Activated CD8-positive, alpha-beta memory T cell treated with anti-CD3 and anti-CD28 coated beads, Interleukin-2, amount 10 ng/mL, durations not matched to agents 7 days and 5 days (primary cell): ENCODE measurements at regions of chr11 and their contacts with region 1.

Region 1: GRCh38 chr11:62787005-62787759 is at the start of gene TMEM179B:
- DNase-seq: peak; percentile 99
- ATAC-seq: peak; percentile 71
- H3K4me3 Mint-ChIP-seq: peak within 1 kb of the TSS; percentile 95
- H3K27ac Mint-ChIP-seq: peak within 1 kb of the TSS; percentile 97
- H3K4me1 Mint-ChIP-seq: peaks cover 45% of the 10 kb centered on the region
- H3K27me3 Mint-ChIP-seq: no peaks in the 10 kb centered on the region
- total RNA-seq, gene TMEM179B: 42.4 to 43.0 TPM

Region 2: DNA sequence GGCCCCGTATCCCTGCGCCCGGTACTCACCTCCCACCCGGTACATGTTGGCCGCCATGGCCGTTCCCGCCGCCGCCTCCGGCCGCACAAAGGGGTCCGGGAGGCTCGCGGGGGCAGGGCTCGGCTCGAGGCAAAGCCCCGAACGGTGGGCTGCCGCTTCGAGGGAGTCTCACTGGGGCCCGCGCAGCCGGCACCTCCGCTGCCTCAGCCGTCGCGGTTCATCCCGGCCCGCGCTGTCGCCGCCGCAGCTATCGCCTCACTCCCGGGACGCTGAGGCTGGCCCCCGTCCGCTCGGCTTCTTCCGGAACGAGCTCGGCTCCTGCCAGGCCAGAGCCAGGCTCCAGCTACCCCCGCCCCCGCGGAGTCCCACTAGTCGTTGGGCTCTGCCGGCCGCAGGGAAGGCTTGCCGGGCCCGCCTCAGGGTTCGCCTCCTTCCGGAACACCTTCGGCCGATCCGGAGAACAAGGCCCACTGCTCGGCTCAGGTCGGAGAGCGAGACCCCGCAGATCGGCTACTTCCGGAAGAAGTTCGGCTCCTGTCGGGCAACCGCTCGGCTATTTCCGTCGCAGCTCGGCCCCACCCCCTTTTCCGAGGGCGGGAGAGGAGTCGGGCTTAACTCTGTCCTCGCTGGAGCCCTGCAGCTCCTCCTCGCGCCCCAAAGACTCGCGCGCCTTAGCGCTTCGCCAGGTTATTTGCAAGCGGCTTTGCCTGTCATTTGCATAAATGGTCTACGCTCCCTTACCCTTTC is 185.6 kb before region 1 on chr11 and contains the start of gene MTA2:
- CTCF ChIA-PET with region 1: no interaction called
- DNase-seq: peak; percentile 99
- ATAC-seq: peak; percentile 89
- H3K4me3 Mint-ChIP-seq: peak within 1 kb of the TSS; percentile 97
- H3K27ac Mint-ChIP-seq: peak within 1 kb of the TSS; percentile 94
- H3K4me1 Mint-ChIP-seq: peaks cover 54% of the 10 kb centered on the region
- H3K27me3 Mint-ChIP-seq: no peaks in the 10 kb centered on the region
- total RNA-seq, gene MTA2: 245 to 264 TPM

Region 3: DNA sequence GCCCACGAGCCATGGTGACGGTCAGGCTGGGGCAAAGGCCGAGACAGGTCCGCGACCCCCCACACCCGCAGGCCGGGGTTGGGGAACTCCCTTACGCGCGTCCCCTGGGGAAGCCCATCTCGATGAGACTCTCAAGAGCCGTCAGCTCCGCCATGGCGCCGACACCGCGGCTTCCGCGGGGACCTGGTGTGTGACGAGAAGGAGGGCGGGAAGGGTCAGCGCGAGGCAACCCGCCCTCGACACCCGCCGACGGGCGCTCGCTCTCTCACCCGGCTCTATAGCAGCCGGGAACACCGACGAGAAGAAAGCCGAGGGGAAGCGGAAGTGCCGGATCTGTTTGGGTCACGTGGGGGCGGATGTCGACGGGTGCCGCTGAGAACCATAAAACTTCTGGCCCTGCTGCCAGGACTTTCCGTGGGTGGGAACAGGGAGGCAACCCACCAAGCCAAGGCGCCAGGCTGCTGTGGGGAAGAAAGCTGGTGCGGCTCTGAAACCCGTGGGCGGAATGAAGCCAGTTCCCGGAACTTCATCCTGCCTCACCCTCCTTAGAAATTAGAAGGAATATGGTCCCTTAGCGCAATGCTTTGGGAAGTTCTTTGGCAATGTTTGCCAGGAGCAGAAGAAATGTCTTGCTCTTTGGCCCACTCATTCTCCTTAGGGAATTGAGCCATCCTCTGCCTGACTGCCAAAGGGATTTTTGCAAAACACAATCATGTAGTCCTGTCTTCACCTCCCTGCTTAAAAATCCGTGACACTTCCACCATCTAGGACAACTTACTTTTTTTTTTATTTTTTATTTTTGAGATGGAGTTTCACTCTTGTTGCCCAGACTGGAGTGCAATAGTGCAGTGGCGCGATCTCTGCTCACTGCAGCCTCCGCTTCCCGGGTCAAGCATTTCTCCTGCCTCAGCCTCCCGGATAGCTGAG is 108.1 kb before region 1 on chr11 and contains the start of gene UBXN1:
- CTCF ChIA-PET with region 1: interaction called, 15 read pairs
- DNase-seq: peak; percentile 89
- ATAC-seq: peak; percentile 90
- H3K4me3 Mint-ChIP-seq: peak within 1 kb of the TSS; percentile 84
- H3K27ac Mint-ChIP-seq: peak within 1 kb of the TSS; percentile 90
- H3K4me1 Mint-ChIP-seq: peaks cover 34% of the 10 kb centered on the region
- H3K27me3 Mint-ChIP-seq: no peaks in the 10 kb centered on the region
- total RNA-seq, gene UBXN1: 115 to 152 TPM

Region 4: GRCh38 chr11:62732801-62733200 is 54.4 kb before region 1 on chr11:
- CTCF ChIA-PET with region 1: interaction called, 12 read pairs
- DNase-seq: no peak
- ATAC-seq: no peak
- H3K4me3 Mint-ChIP-seq: no peak overlapping the region
- H3K27ac Mint-ChIP-seq: no peak overlapping the region
- H3K4me1 Mint-ChIP-seq: peaks cover 30% of the 10 kb centered on the region
- H3K27me3 Mint-ChIP-seq: no peaks in the 10 kb centered on the region

Region 5: DNA sequence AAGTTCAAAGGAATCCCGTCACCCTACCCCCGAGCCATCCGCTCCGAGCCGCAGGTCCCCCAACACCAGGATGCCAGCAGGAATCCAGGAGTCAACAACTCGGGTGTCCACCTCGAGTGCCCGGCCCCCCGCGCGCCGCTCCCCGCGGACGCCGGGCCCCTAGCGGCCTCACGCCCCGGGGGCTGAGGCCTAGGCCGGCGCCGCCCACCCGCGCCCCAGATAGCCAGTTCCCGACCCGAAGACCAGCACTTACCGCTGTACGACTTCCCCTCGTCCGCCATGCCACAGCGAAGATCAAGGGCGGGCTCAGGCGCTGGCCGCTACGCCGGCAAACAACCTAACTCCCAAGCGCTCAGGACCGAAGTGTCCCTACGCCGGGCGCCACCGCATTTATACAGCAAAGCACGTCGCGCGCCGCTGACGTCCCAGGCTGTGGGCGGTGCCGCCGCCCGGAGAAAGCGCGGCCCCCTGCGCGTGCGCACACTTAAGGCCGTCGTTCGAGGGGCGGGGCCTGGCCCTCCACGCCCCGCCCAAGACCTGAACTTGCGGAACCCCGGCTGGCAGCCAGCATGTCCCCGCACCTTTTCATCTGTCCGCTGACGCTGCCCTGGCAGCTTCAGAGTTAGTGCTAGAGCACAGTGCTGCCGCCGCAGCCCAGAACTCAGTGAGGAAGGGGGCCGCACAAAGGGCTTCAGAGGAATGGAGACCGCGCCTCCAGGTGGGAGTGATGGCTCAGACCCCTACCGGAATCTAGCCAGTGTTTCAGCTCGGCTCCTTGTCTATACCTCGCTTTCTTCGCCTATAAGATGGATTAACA is 18.1 kb after region 1 on chr11 and contains the start of gene NXF1:
- CTCF ChIA-PET with region 1: interaction called, 40 read pairs
- DNase-seq: peak; percentile 95
- ATAC-seq: peak; percentile 83
- H3K4me3 Mint-ChIP-seq: peak within 1 kb of the TSS; percentile 99
- H3K27ac Mint-ChIP-seq: peak within 1 kb of the TSS; percentile 98
- H3K4me1 Mint-ChIP-seq: peaks cover 49% of the 10 kb centered on the region
- H3K27me3 Mint-ChIP-seq: no peaks in the 10 kb centered on the region
- total RNA-seq, gene NXF1: 93.6 to 120 TPM

Region 6: GRCh38 chr11:62831520-62832335 is 44.5 kb after region 1 on chr11 and contains the start of gene STX5:
- CTCF ChIA-PET with region 1: interaction called, 28 read pairs
- DNase-seq: peak; percentile 100
- ATAC-seq: peak; percentile 91
- H3K4me3 Mint-ChIP-seq: peak within 1 kb of the TSS; percentile 86
- H3K27ac Mint-ChIP-seq: peak within 1 kb of the TSS; percentile 98
- H3K4me1 Mint-ChIP-seq: peaks cover 34% of the 10 kb centered on the region
- H3K27me3 Mint-ChIP-seq: no peaks in the 10 kb centered on the region
- total RNA-seq, gene STX5: 30.8 to 38.4 TPM

Region 7: GRCh38 chr11:62860835-62861563 is 73.8 kb after region 1 on chr11:
- CTCF ChIA-PET with region 1: interaction called, 74 read pairs
- DNase-seq: peak; percentile 51
- ATAC-seq: peak; percentile 41
- H3K4me3 Mint-ChIP-seq: no peak overlapping the region
- H3K27ac Mint-ChIP-seq: peak overlapping the region; percentile 83
- H3K4me1 Mint-ChIP-seq: peaks cover 59% of the 10 kb centered on the region
- H3K27me3 Mint-ChIP-seq: peaks cover under 1% of the 10 kb centered on the region

Region 8: GRCh38 chr11:62896049-62896448 is 108.9 kb after region 1 on chr11:
- CTCF ChIA-PET with region 1: no interaction called
- DNase-seq: no peak
- ATAC-seq: no peak
- H3K4me3 Mint-ChIP-seq: no peak overlapping the region
- H3K27ac Mint-ChIP-seq: no peak overlapping the region
- H3K4me1 Mint-ChIP-seq: peaks cover 4% of the 10 kb centered on the region
- H3K27me3 Mint-ChIP-seq: peaks cover 24% of the 10 kb centered on the region

Region 9: DNA sequence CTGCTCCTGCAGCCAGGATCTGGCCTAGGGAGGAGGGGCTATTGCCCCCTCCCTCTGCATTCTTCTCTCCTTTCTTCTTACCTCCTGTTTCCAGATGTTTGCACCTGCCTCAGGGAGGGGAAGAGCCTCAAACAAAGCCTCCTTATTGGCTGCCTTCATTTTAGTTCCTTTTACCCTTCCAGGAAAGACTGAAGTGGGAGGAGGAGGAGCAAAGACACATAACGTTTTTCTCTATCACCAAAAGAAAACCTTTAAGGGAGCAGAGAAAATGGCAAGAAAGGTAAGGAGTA is 147.3 kb after region 1 on chr11:
- CTCF ChIA-PET with region 1: no interaction called
- DNase-seq: no peak
- ATAC-seq: no peak
- H3K4me3 Mint-ChIP-seq: no peak overlapping the region
- H3K27ac Mint-ChIP-seq: no peak overlapping the region
- H3K4me1 Mint-ChIP-seq: no peaks in the 10 kb centered on the region
- H3K27me3 Mint-ChIP-seq: peaks cover 27% of the 10 kb centered on the region

Region 10: DNA sequence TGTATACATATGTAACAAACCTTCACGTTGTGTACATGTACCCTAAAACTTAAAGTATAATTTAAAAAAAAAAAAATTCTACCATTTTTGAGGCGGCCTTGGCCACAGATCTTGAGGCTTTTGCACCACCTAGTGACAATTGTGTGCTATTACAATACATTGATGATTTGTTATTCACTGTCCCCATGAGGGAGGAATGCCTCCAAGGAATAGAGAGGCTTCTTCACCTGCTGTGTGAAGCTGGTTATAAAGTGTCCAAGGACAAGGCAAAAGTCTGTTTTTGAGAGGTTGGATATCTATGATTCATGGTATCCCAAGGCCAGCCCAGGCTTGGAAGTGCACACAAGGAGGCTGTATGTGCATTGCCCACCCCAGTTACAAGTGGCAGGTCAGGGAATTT is 425.6 kb after region 1 on chr11:
- CTCF ChIA-PET with region 1: no interaction called
- DNase-seq: no peak
- ATAC-seq: no peak
- H3K4me3 Mint-ChIP-seq: no peak overlapping the region
- H3K27ac Mint-ChIP-seq: no peak overlapping the region
- H3K4me1 Mint-ChIP-seq: no peaks in the 10 kb centered on the region
- H3K27me3 Mint-ChIP-seq: peaks cover 10% of the 10 kb centered on the region